Activated CD4-positive, alpha-beta memory T cell treated with anti-CD3 and anti-CD28 coated beads for 36 hours (primary cell): ENCODE measurements at regions of chr3 and their contacts with region 1.

Region 1: DNA sequence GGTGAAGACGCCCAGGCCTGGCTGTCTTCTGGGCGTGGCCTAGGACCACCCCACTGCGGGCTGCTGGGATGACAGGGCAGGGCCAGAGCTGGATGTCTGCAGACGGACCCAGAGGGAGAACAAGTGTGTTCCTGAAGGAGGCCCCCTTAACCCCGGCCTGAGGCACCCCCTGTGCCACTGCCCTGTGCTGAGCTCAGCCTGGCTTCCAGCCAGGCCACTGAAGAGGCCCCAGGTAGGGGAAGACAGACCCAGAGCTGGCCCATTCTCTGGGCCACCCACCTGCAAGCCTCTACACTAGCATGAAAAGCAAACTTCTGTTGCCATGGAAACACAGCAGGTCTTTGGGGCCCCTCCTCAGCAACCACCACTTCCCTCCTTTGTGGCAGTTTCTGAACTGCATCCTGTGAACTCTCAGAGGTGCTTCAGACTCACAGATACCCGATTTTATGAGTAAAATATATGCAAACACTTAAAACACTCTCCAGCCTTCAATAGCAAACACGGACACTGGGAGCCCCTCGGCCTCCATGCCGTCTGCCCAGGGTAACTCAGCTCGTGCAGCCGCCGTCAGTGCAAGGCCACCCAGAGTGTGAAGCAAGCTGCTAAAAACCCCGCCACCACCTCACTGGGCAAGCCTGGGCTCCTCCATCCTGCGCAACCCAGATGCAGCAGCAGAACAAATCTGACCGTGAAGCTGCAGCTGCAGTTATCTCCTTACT is 42.5 kb downstream of the CMTM6 start:
- DNase-seq: peak; percentile 86
- H3K4me3 Mint-ChIP-seq: peak overlapping the region; percentile 63
- H3K27ac Mint-ChIP-seq: no peak overlapping the region
- H3K4me1 Mint-ChIP-seq: peaks cover 31% of the 10 kb centered on the region
- H3K27me3 Mint-ChIP-seq: no peaks in the 10 kb centered on the region

Region 2: GRCh38 chr3:32414520-32415202 is 45.5 kb before region 1 on chr3:
- CTCF ChIA-PET with region 1: no interaction called
- POLR2A ChIA-PET with region 1: interaction called, 3 read pairs
- intact Hi-C with region 1: loop called (anchors 1 kb)
- DNase-seq: peak; percentile 68
- H3K4me3 Mint-ChIP-seq: peak overlapping the region; percentile 49
- H3K27ac Mint-ChIP-seq: peak overlapping the region; percentile 94
- H3K4me1 Mint-ChIP-seq: peaks cover 65% of the 10 kb centered on the region
- H3K27me3 Mint-ChIP-seq: no peaks in the 10 kb centered on the region